ENCODE measurements at regions of chr12 and their contacts with region 1.

Region 1: GRCh38 chr12:120580787-120581723 is at the start of gene POP5:
- DNase-seq: peak; percentile 97
- H3K4me3 ChIP-seq: peak within 1 kb of the TSS; percentile 49 to 87 (median 81)
- H3K27ac ChIP-seq: peak within 1 kb of the TSS; percentile 10
- H3K4me1 ChIP-seq: peaks cover 16% of the 10 kb centered on the region
- H3K27me3 ChIP-seq: no peaks in the 10 kb centered on the region
- CTCF ChIP-seq: no peak
- total RNA-seq, gene POP5: 19.3 to 35.6 TPM

Region 2: DNA sequence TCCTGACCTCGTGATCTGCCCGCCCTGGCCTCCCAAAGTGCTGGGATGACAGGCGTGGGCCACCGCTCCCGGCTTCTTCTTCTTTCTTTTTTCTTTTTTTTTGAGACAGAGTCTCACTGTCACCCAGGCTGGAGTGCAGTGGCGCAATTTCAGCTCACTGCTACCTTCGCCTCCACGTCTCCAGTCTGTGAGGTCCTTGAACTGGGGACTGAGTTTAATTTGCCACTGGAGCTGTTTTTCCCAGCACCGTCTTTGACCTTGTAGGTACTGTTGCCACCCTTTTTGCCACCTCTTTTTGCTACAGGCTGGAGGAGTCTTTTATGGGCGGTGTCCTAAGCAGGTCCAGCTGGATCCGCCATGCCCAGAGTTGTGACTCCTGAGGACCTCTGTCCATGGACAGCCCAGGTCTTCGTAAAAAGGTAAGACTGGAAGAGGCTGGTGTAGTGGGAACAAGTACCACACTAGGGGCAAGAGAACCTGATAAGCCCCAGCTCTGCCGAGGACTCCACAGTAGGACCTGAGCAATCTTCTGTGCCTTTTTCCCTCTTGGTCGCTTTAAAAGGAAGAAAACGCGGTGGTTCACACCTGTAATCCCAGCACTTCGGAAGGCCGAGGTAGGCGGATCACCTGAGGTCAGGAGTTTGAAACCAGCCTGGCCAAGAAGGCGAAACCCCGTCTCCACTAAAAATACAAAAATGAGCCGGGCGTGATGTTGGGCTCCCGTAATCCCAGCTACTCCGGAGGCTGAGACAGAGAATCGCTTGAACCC is 290.3 kb before region 1 on chr12:
- CTCF ChIA-PET with region 1: no interaction called
- dilution Hi-C with region 1: no loop called
- in situ Hi-C with region 1: no loop called
- intact Hi-C with region 1: no loop called
- DNase-seq: no peak
- H3K4me3 ChIP-seq: peak overlapping the region in 1 of 3 experiments; percentile 26
- H3K27ac ChIP-seq: peak overlapping the region; percentile 100
- H3K4me1 ChIP-seq: peaks cover 10% of the 10 kb centered on the region
- H3K27me3 ChIP-seq: no peaks in the 10 kb centered on the region
- CTCF ChIP-seq: no peak

Region 3: GRCh38 chr12:120327593-120327992 is 253.5 kb before region 1 on chr12 and contains the start of gene PLA2G1B:
- CTCF ChIA-PET with region 1: no interaction called
- dilution Hi-C with region 1: no loop called
- in situ Hi-C with region 1: no loop called
- intact Hi-C with region 1: loop called (anchors 5 kb)
- DNase-seq: no peak
- H3K4me3 ChIP-seq: no peak within 1 kb of the TSS
- H3K27ac ChIP-seq: no peak within 1 kb of the TSS
- H3K4me1 ChIP-seq: peaks cover 4% of the 10 kb centered on the region
- H3K27me3 ChIP-seq: peaks cover 2% of the 10 kb centered on the region
- CTCF ChIP-seq: no peak
- total RNA-seq, gene PLA2G1B: not detected

Region 4: GRCh38 chr12:120481022-120481767 is 99.9 kb before region 1 on chr12:
- CTCF ChIA-PET with region 1: no interaction called
- dilution Hi-C with region 1: no loop called
- in situ Hi-C with region 1: no loop called
- intact Hi-C with region 1: no loop called
- DNase-seq: no peak
- H3K4me3 ChIP-seq: no peak overlapping the region
- H3K27ac ChIP-seq: no peak overlapping the region
- H3K4me1 ChIP-seq: no peaks in the 10 kb centered on the region
- H3K27me3 ChIP-seq: no peaks in the 10 kb centered on the region
- CTCF ChIP-seq: no peak

Region 5: GRCh38 chr12:120534203-120534702 is 46.8 kb before region 1 on chr12 and contains the start of gene RNF10:
- CTCF ChIA-PET with region 1: no interaction called
- dilution Hi-C with region 1: loop called (anchors 5 kb)
- in situ Hi-C with region 1: no loop called
- intact Hi-C with region 1: no loop called
- DNase-seq: peak; percentile 78
- H3K4me3 ChIP-seq: peak within 1 kb of the TSS; percentile 80 to 87 (median 83)
- H3K27ac ChIP-seq: peak within 1 kb of the TSS; percentile 74
- H3K4me1 ChIP-seq: peaks cover 49% of the 10 kb centered on the region
- H3K27me3 ChIP-seq: no peaks in the 10 kb centered on the region
- CTCF ChIP-seq: no peak
- total RNA-seq, gene RNF10: 104 to 152 TPM

Region 6: DNA sequence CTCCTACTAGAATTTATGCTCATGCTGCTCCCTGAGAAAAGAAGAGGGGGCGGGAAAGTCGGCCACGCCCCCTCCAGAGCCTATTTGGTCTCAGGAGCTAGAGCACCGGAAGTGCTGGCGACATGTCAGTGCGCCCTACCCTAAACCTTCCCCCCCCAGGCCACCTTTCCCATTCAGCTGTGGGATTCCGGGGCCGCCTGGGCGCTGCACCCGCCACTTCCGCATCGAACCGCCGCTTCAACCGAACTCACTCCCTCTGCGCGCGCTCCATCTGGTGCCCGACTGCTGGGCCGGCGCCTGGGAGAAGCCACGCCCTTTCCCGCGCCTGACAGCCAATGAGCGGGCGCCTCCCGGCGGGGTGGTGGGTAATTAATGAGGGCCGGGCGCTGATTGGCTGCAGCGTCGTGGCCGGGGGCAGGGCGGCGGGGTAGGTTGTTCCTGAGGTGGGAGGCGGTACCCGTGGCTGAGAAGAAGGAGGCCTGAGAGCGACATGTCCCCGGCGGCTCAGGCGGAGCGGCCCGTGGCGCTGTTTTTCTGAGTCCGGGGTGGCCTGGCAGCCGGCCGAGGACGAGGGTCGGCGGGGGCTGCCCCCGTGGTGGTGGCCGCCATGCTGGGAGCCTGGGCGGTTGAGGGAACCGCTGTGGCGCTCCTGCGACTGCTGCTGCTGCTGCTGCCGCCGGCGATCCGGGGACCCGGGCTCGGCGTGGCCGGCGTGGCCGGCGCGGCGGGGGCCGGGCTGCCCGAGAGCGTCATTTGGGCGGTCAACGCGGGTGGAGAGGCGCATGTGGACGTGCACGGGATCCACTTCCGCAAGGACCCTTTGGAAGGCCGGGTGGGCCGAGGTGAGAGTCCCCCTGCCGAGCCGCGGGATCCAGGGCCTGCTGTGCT is 105.9 kb after region 1 on chr12 and contains the start of gene MLEC:
- CTCF ChIA-PET with region 1: no interaction called
- dilution Hi-C with region 1: no loop called
- in situ Hi-C with region 1: no loop called
- intact Hi-C with region 1: loop called (anchors 1 kb)
- DNase-seq: peak; percentile 98
- H3K4me3 ChIP-seq: peak within 1 kb of the TSS; percentile 73 to 98 (median 82)
- H3K27ac ChIP-seq: peak within 1 kb of the TSS; percentile 89
- H3K4me1 ChIP-seq: peaks cover 28% of the 10 kb centered on the region
- H3K27me3 ChIP-seq: no peaks in the 10 kb centered on the region
- CTCF ChIP-seq: peak in 1 of 2 donors; percentile 24
- total RNA-seq, gene MLEC: 64.7 to 114 TPM

Region 7: DNA sequence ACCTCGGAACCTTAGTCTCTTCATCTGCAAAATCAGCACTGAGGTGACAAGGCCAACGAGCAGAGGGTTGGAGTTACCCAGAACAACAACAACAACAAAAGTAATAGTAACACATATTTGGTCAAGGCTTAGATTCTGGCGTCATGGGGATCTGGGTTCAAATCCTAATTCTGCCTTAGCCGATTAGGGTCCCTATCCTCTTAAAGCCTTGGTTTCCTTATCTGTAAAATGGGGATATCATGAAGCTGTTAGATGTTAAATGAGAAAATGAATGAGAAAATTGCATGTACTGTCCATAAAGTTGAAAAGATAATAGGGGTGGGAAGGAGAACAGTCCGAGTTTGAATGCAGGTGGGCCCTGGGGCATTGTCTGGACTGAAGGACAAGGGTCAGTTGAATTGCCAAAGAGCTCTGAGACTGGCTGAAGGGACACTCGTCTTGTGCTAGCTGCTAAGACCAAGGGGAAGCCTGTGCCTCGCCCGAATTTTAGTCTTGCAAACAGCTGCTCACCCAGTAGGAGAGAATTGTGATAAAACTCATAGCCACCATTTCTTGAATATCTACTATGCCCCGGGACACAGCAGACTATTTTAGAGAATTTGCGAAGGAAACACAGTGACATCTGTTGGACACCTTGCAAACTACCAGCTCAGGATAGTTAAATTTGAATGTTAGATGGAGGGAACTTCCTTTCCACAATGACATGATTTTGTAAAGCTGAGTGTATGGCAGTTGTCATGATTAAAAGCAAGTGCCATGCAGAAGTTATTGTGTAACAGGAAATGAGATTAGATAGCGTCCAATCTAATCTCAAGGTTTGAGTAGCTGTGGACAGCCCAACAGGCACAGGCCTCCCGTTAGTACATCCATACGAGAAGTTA is 390.5 kb after region 1 on chr12:
- CTCF ChIA-PET with region 1: interaction called, 5 read pairs
- dilution Hi-C with region 1: no loop called
- in situ Hi-C with region 1: loop called in 1 of 2 experiments (anchors 25 kb)
- intact Hi-C with region 1: loop called (anchors 1 kb)
- DNase-seq: peak; percentile 50
- H3K4me3 ChIP-seq: no peak overlapping the region
- H3K27ac ChIP-seq: no peak overlapping the region
- H3K4me1 ChIP-seq: no peaks in the 10 kb centered on the region
- H3K27me3 ChIP-seq: no peaks in the 10 kb centered on the region
- CTCF ChIP-seq: peak; percentile 80

Region 8: DNA sequence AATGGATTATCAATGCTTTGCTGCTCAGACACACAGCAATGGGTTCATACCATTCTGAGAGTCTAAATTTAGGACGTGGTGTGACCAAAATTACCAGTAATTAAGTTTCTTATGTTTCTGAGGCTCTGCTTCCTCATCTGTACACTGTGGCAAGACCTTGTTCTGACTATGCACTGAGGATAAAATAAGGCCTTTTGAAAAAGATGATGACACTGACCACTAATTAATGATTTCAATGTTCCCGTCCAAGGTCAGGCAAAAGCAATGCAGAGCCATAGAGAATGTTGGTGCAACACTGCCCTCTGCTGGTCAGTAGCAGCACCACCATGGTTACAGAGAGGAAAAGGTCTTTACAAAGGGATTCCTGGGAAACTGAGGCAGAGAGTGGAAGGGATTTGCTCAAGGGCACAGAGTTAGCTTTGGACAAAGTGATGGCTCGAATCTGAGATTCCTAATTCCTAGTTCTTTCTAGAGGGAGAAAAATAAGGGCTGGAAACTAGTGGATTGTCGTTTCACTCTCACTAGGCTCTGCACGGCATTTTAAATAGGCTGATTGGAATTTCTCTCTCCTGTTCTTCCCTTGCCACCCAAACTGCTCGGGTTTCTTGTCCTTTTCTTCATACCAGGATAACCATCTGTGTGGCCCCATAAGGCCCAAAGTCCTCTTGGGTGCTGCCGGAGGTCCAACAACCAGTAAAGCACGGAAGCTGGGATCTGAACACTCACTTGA is 529.3 kb after region 1 on chr12:
- CTCF ChIA-PET with region 1: no interaction called
- dilution Hi-C with region 1: no loop called
- in situ Hi-C with region 1: no loop called
- intact Hi-C with region 1: loop called (anchors 2 kb)
- DNase-seq: peak; percentile 38
- H3K4me3 ChIP-seq: no peak overlapping the region
- H3K27ac ChIP-seq: no peak overlapping the region
- H3K4me1 ChIP-seq: no peaks in the 10 kb centered on the region
- H3K27me3 ChIP-seq: no peaks in the 10 kb centered on the region
- CTCF ChIP-seq: peak; percentile 92 to 98